T-cell (primary cell): ENCODE measurements at regions of chr7 and their contacts with region 1.

Region 1: DNA sequence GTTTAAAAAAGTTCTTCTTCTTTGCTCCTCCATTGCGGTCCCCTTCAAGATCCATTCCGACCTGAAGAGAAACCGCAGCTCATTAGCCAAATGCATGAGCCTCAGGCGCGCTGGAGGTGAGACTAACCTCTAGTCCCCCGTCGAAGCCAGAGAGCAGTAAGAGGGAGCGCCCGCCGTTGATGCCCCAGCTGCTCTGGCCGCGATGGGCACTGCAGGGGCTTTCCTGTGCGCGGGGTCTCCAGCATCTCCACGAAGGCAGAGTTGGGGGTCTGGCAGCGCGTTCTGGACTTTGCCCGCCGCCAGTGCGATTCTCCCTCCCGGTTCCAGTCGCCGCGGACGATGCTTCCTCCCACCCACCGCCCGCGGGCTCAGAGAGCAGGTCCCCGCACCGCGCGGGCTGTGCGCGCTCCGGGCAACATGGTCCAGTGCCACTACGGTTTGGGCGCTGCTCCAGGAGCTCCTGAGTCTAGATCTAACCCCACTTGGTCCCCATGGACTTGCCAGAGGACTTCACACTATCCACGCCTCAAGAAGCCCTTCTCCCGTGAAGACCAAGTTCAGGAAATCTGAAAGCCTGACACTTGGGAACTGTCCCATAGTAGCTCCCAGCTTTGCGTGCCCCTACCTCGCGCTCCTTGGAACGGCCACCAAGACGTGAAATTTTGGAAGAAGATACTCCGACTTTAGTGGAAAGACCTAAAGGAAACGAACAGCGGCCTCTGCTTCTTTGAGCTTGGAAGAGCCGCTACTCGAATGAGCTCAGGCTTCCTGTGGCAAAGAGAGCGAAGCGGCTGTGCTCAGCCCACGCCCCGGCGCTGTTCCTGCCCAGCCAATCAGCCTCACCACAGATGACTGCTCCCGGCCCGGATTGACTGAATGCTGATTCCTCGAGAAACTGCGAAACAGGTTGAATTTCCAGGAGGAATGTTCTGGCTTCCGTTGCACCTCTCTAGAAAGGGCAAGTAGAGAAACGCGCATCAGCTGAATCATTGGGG is at the start of gene ABCB1:
- DNase-seq: peak; percentile 4 to 69 (median 38)
- ATAC-seq: peak; percentile 88 to 93 (median 92)
- H3K4me3 ChIP-seq: peak within 1 kb of the TSS; percentile 72 to 96
- H3K4me3 Mint-ChIP-seq: peak within 1 kb of the TSS; percentile 78 to 91 (median 81)
- H3K27ac ChIP-seq: peak within 1 kb of the TSS; percentile 70
- H3K27ac Mint-ChIP-seq: peak within 1 kb of the TSS; percentile 79
- H3K4me1 ChIP-seq: peaks cover 10 to 18% of the 10 kb centered on the region in 2 experiments
- H3K4me1 Mint-ChIP-seq: peaks cover 32 to 45% (median 37%) of the 10 kb centered on the region in 3 donors
- H3K27me3 ChIP-seq: peaks cover 0 to 10% of the 10 kb centered on the region in 2 experiments
- H3K27me3 Mint-ChIP-seq: peaks cover 7 to 47% of the 10 kb centered on the region in 2 donors
- total RNA-seq, gene ABCB1: 12.8 to 46.4 (median 25.2) TPM

Region 2: DNA sequence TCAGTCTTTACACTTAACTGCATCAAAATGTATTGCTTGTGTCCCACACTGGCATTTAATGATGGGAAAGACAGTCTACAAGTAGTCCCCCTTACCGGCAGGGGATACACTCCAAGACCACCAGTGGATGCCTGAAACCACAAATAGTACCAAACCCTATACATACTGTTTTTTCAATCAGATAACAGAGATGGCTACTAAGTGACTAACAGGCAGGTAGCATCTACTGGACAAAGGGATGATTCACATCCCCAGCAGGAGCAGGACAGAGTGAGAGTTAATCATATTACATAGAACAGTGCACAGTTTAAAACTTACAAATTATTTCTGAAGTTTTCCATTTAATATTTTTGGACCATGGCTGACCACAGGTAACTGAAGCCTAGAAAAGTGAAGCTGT is 394.1 kb before region 1 on chr7:
- CTCF ChIA-PET with region 1: no interaction called
- POLR2A ChIA-PET with region 1: interaction called in 1 of 2 experiments, 13 read pairs
- DNase-seq: no peak
- ATAC-seq: no peak
- H3K4me3 ChIP-seq: no peak overlapping the region
- H3K4me3 Mint-ChIP-seq: no peak overlapping the region
- H3K27ac ChIP-seq: no peak overlapping the region
- H3K27ac Mint-ChIP-seq: peak overlapping the region; percentile 16 to 17
- H3K4me1 ChIP-seq: peaks cover 4 to 45% of the 10 kb centered on the region in 2 experiments
- H3K4me1 Mint-ChIP-seq: peaks cover 69 to 73% (median 73%) of the 10 kb centered on the region in 3 donors
- H3K27me3 ChIP-seq: no peaks in the 10 kb centered on the region
- H3K27me3 Mint-ChIP-seq: no peaks in the 10 kb centered on the region

Region 3: DNA sequence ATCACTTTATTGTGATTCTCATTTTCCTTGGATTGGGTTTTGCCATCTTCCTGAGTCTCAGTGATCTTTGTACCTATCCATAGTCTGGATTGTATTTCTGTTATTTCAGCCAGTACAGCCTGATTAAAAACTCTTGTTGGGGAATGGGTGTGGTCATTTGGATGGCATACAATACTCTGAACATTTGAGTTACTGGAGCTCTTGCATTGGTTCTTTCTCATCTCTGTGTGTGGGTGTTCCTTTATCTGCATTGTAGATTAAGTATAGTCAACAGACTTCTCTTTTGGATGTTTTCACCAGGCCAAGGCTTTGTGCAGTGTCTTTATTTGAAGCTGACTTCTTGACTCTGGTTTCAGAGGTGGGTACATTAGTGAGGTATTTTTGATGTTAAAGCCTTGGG is 69.9 kb after region 1 on chr7:
- CTCF ChIA-PET with region 1: no interaction called
- POLR2A ChIA-PET with region 1: no interaction called
- DNase-seq: no peak
- ATAC-seq: no peak
- H3K4me3 ChIP-seq: no peak overlapping the region
- H3K4me3 Mint-ChIP-seq: no peak overlapping the region
- H3K27ac ChIP-seq: no peak overlapping the region
- H3K27ac Mint-ChIP-seq: no peak overlapping the region
- H3K4me1 ChIP-seq: no peaks in the 10 kb centered on the region
- H3K4me1 Mint-ChIP-seq: no peaks in the 10 kb centered on the region
- H3K27me3 ChIP-seq: peaks cover 0 to 26% of the 10 kb centered on the region in 2 experiments
- H3K27me3 Mint-ChIP-seq: peaks cover 7 to 8% of the 10 kb centered on the region in 2 donors

Region 4: GRCh38 chr7:87910138-87910537 is 309.7 kb after region 1 on chr7:
- CTCF ChIA-PET with region 1: no interaction called
- POLR2A ChIA-PET with region 1: interaction called in 1 of 2 experiments, 10 read pairs
- DNase-seq: no peak
- ATAC-seq: no peak
- H3K4me3 ChIP-seq: no peak overlapping the region
- H3K4me3 Mint-ChIP-seq: no peak overlapping the region
- H3K27ac ChIP-seq: no peak overlapping the region
- H3K27ac Mint-ChIP-seq: no peak overlapping the region
- H3K4me1 ChIP-seq: no peaks in the 10 kb centered on the region
- H3K4me1 Mint-ChIP-seq: peaks cover 0 to 6% (median 4%) of the 10 kb centered on the region in 3 donors
- H3K27me3 ChIP-seq: no peaks in the 10 kb centered on the region
- H3K27me3 Mint-ChIP-seq: no peaks in the 10 kb centered on the region